PC-9 (cell line): ENCODE measurements at regions of chr1 and their contacts with region 1.

Region 1: DNA sequence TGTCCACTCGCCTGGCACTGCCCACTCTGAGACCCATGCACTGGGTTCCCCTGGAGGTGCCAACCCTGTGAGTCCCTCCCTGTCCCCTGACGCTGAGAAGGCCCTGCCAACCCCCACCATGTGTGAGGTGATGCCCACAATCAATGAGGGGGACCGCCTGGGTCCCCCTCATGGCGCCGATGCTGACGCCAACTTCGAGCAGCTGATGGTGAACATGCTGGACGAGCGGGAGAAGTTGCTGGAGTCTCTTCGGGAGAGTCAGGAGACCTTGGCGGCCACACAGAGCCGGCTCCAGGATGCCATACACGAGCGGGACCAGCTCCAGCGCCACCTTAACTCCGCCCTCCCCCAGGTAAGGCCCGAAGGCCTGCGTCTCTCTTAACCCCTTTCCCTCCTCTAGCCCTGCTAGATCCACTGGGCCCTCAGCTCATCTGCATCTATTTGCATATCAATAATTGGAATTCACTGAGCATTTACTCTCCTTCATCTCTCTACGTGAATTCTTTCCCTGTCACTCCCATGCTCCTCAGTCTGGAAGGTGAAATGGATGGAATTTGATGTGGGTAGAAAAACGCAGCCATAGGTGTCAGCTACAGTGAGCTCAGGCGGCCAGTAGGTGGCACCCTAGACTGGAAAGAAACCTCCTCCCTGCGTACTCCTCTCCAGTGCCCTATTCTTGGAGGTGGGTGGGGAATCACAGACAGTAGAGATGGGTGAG is 12.8 kb downstream of the PPFIA4 start:
- DNase-seq: peak; percentile 44 to 55
- H3K4me3 ChIP-seq: no peak overlapping the region
- H3K27ac ChIP-seq: no peak overlapping the region
- H3K4me1 ChIP-seq: no peaks in the 10 kb centered on the region
- H3K27me3 ChIP-seq: peaks cover 5% of the 10 kb centered on the region; the same call in 1 of the 2 replicates
- CTCF ChIP-seq: peak; percentile 95

Region 2: GRCh38 chr1:203172128-203173010 is 133.3 kb after region 1 on chr1:
- CTCF ChIA-PET with region 1: interaction called, 4 read pairs
- POLR2A ChIA-PET with region 1: no interaction called
- intact Hi-C with region 1: loop called (anchors 1 kb)
- DNase-seq: peak; percentile 46 to 74
- H3K4me3 ChIP-seq: no peak overlapping the region
- H3K27ac ChIP-seq: no peak overlapping the region
- H3K4me1 ChIP-seq: peaks cover 31% of the 10 kb centered on the region
- H3K27me3 ChIP-seq: no peaks in the 10 kb centered on the region
- CTCF ChIP-seq: peak; percentile 91

Region 3: DNA sequence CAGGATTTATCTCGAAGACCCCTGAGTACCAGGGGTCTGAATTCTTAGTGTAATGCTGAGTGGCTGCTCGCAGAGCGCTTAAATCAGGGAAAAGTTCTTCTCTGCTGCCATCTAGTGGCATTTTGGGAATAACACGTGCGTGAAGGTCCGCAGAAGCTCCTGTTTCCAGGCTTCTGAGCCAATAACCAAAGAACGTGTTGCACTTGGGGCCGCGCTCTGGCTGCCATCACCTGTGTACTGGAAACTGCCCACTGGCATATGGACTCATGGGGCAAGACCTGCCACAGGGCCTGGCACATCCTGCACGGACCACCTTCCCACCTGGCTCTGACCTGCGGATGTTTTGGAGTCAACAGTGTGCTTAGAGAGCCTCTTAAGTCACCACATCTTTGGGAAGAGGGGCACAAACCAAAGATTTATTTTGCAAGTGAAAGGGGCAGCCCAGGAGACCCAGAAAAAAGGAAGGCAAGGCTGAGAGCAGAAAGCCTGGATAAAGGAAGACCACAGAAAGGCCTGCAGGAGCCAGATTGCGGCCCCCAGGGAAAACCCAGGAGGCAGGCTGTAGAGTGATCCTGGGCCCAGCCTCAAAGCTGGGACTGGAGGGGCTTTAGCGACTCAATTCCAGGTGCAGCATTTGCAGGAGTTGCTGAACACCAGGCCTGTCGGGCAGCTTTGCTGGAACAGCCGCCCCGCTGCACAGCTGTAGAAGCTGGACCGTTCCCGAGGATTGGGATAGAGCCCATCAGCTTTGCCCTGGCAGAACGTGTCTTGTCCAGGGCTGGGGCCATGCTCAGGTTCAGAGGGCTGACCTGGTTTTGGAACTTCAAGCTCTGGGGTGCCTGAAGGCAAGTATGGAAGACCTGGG is 177.5 kb after region 1 on chr1:
- CTCF ChIA-PET with region 1: interaction called, 23 read pairs
- POLR2A ChIA-PET with region 1: interaction called, 4 read pairs
- intact Hi-C with region 1: loop called (anchors 1 kb)
- DNase-seq: peak; percentile 55 to 56
- H3K4me3 ChIP-seq: no peak overlapping the region
- H3K27ac ChIP-seq: no peak overlapping the region
- H3K4me1 ChIP-seq: no peaks in the 10 kb centered on the region
- H3K27me3 ChIP-seq: peaks cover 18% of the 10 kb centered on the region; the same call in 1 of the 2 replicates
- CTCF ChIP-seq: peak; percentile 86

Region 4: DNA sequence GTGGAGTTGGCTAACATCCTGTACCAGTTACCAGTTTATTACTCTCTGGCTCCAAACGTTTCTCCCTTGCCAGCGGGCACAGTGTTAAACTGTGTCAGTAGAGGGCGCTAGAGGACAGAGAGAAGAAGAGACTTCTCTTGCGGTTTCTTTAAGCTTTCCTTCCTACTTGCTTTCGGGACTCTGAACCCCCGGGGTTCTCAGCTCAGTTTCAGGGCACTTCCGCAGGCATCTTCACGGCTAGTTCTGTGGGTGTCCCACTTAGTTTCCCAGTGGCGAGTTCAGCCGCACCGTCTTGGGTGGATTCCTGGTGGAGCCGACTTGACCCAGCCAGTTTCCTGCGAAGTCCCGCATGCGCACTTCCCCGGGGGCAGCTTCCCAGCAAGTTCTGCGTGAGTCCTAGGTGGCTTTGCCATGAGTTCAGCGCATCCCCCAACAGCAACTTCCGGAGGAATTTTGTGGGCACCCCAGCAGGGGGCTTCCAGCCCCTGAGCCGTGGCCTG is 228.3 kb after region 1 on chr1:
- CTCF ChIA-PET with region 1: interaction called, 27 read pairs
- POLR2A ChIA-PET with region 1: no interaction called
- intact Hi-C with region 1: loop called (anchors 1 kb)
- DNase-seq: peak; percentile 60 to 68
- H3K4me3 ChIP-seq: no peak overlapping the region
- H3K27ac ChIP-seq: no peak overlapping the region
- H3K4me1 ChIP-seq: no peaks in the 10 kb centered on the region
- H3K27me3 ChIP-seq: no peaks in the 10 kb centered on the region
- CTCF ChIP-seq: peak; percentile 91

Region 5: GRCh38 chr1:203326830-203327683 is 288.0 kb after region 1 on chr1:
- CTCF ChIA-PET with region 1: no interaction called
- POLR2A ChIA-PET with region 1: no interaction called
- intact Hi-C with region 1: loop called (anchors 5 kb)
- DNase-seq: peak; percentile 77 to 94
- H3K4me3 ChIP-seq: peak overlapping the region; percentile 63
- H3K27ac ChIP-seq: peak overlapping the region; percentile 61
- H3K4me1 ChIP-seq: peaks cover 22% of the 10 kb centered on the region
- H3K27me3 ChIP-seq: peaks cover 17% of the 10 kb centered on the region; the same call in 1 of the 2 replicates
- CTCF ChIP-seq: no peak